GM12878 (cell line): ENCODE measurements at regions of chr5 and their contacts with region 1.

Region 1: DNA sequence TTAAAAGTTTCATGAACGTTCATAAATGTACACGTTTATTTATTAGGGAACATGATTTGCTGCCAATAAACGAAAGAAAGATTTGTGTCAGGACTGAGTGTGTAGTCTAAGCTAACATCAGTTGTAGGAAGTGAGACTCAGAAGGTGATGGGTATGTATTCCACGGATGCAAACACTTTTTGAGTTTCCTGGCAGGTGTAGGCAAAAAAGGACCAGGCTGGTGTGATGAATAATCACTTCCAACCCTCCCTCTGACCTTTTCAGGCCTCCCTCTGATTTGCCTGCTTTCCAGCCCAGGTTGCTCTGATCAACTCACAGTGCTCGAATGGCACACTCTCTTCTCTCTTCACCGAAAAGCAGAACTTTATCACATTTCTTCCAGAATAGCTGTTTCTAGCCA is 51.8 kb downstream of the BASP1 start:
- DNase-seq: no peak
- ATAC-seq: peak; percentile 67
- H3K4me3 ChIP-seq: peak overlapping the region; percentile 49; the same call in 1 of the 2 replicates
- H3K27ac ChIP-seq: peak overlapping the region; percentile 45; the same call in 1 of the 2 replicates
- H3K4me1 ChIP-seq: 0 out of 2 replicates have a peak, but pooled peaks cover 2% of the 10 kb centered on the region
- H3K27me3 ChIP-seq: no peaks in the 10 kb centered on the region
- CTCF ChIP-seq: no peak
- EP300 ChIP-seq: no peak
- POLR2A ChIP-seq: no peak
- RAD21 ChIP-seq: no peak

Region 2: DNA sequence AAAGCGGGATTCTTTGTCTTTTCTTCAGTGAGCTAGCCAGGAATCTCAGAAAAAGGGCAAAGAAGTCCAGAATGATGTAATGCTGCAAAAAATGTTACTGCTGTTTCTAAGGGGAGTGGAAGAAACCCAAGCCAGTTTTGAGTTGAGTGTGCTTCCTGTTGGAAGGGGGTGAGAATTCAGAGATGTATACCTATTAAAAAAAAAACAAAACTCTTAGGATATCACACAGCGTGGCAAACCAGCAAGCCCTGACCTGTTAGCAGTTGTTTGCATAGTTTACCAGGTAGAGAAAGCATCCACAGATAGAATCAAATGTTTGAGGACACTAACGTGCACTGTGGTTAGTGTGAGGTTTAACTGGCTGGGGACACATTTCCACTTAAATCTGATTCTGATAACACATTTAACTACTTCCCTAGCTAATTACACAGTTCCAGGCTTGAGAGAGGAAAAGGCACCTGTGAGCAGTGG is 40.3 kb before region 1 on chr5:
- CTCF ChIA-PET with region 1: no interaction called
- POLR2A ChIA-PET with region 1: interaction called, 6 read pairs
- RAD21 ChIA-PET with region 1: interaction called, 11 read pairs
- SMC1A ChIA-PET with region 1: interaction called, 36 read pairs
- in situ Hi-C with region 1: no loop called
- intact Hi-C with region 1: no loop called
- DNase-seq: peak; percentile 66
- ATAC-seq: peak; percentile 64
- H3K4me3 ChIP-seq: peak overlapping the region; percentile 13; the same call in 1 of the 2 replicates
- H3K27ac ChIP-seq: peak overlapping the region; percentile 88
- H3K4me1 ChIP-seq: peaks cover 34% of the 10 kb centered on the region
- H3K27me3 ChIP-seq: no peaks in the 10 kb centered on the region
- CTCF ChIP-seq: no peak
- EP300 ChIP-seq: peak; percentile 24 to 35; a peak in 1 of 4 replicates
- POLR2A ChIP-seq: no peak
- RAD21 ChIP-seq: 0 out of 2 replicates have a peak, but pooled peaks have one; percentile 1

Region 3: GRCh38 chr5:17282283-17283120 is 13.3 kb after region 1 on chr5:
- CTCF ChIA-PET with region 1: interaction called, 3 read pairs
- POLR2A ChIA-PET with region 1: interaction called, 5 read pairs
- RAD21 ChIA-PET with region 1: interaction called, 6 read pairs
- SMC1A ChIA-PET with region 1: interaction called, 15 read pairs
- in situ Hi-C with region 1: no loop called
- intact Hi-C with region 1: no loop called
- DNase-seq: peak; percentile 91
- ATAC-seq: peak; percentile 95
- H3K4me3 ChIP-seq: peak overlapping the region; percentile 55
- H3K27ac ChIP-seq: peak overlapping the region; percentile 71
- H3K4me1 ChIP-seq: peaks cover 18% of the 10 kb centered on the region
- H3K27me3 ChIP-seq: no peaks in the 10 kb centered on the region
- CTCF ChIP-seq: no peak; a peak in 1 of 6 replicates
- EP300 ChIP-seq: peak; percentile 45 to 61; a peak in 3 of 4 replicates
- POLR2A ChIP-seq: no peak
- RAD21 ChIP-seq: no peak; the same call in 1 of the 2 replicates

Region 4: DNA sequence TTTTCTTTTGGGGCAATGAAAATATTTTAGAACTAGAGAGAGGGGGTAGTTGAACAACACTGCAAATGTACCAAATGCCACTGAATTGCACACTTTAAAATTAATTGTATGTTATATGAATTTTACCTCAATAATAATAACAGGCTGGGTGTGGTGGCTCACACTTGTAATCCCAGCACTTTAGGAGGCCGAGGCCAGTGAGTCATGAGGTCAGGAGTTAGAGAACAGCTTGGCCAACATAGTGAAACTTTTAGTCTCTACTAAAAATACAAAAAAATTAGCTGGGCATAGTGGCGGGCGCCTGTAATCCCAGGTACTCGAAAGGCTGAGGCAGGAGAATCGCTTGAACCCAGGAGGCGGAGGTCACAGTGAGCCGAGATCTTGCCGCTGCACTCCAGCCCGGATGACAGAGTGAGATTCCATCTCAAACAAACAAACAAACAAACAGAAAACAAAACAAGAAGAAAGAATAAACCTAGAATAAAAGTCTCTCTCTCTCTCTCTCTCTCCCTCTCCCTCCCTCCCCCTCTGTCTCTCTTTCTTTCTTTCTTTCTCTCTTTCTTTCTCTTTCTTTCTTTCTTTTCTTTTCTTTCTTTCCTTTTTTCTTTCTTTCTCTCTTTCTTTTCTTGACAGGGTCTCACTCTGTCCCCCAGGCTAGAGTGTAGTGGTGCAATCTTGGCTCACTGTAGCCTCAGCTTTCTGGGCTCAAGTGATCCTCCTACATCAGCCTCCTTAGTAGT is 39.3 kb after region 1 on chr5:
- CTCF ChIA-PET with region 1: no interaction called
- POLR2A ChIA-PET with region 1: interaction called, 10 read pairs
- RAD21 ChIA-PET with region 1: no interaction called
- SMC1A ChIA-PET with region 1: no interaction called
- in situ Hi-C with region 1: no loop called
- intact Hi-C with region 1: no loop called
- DNase-seq: no peak
- ATAC-seq: no peak
- H3K4me3 ChIP-seq: no peak overlapping the region
- H3K27ac ChIP-seq: no peak overlapping the region
- H3K4me1 ChIP-seq: no peaks in the 10 kb centered on the region
- H3K27me3 ChIP-seq: no peaks in the 10 kb centered on the region
- CTCF ChIP-seq: no peak
- EP300 ChIP-seq: no peak
- POLR2A ChIP-seq: no peak
- RAD21 ChIP-seq: no peak

Region 5: GRCh38 chr5:17511775-17512325 is 242.6 kb after region 1 on chr5:
- CTCF ChIA-PET with region 1: no interaction called
- POLR2A ChIA-PET with region 1: no interaction called
- RAD21 ChIA-PET with region 1: no interaction called
- SMC1A ChIA-PET with region 1: no interaction called
- in situ Hi-C with region 1: no loop called
- intact Hi-C with region 1: no loop called
- DNase-seq: no peak
- ATAC-seq: no peak
- H3K4me3 ChIP-seq: no peak overlapping the region
- H3K27ac ChIP-seq: no peak overlapping the region
- H3K4me1 ChIP-seq: no peaks in the 10 kb centered on the region
- H3K27me3 ChIP-seq: no peaks in the 10 kb centered on the region
- CTCF ChIP-seq: no peak
- EP300 ChIP-seq: no peak
- POLR2A ChIP-seq: no peak
- RAD21 ChIP-seq: no peak